ENCODE measurements at regions of chr6 and their contacts with region 1.

Region 1: GRCh38 chr6:130293800-130294199 is 71.0 kb upstream of the SAMD3 start:
- DNase-seq: peak; percentile 49
- ATAC-seq: peak; percentile 98
- H3K4me3 Mint-ChIP-seq: no peak overlapping the region
- H3K27ac Mint-ChIP-seq: 0 out of 2 replicates have a peak overlapping the region, but pooled peaks have one; percentile 20
- H3K4me1 Mint-ChIP-seq: no peaks in the 10 kb centered on the region
- H3K27me3 Mint-ChIP-seq: no peaks in the 10 kb centered on the region; the same call in 1 of the 2 replicates
- CTCF ChIP-seq: 0 out of 2 replicates have a peak, but pooled peaks have one; percentile 12

Region 2: GRCh38 chr6:130127195-130127594 is 166.6 kb before region 1 on chr6:
- CTCF ChIA-PET with region 1: no interaction called
- POLR2A ChIA-PET with region 1: interaction called, 10 read pairs
- DNase-seq: no peak
- ATAC-seq: no peak
- H3K4me3 Mint-ChIP-seq: no peak overlapping the region
- H3K27ac Mint-ChIP-seq: no peak overlapping the region
- H3K4me1 Mint-ChIP-seq: peaks cover 28% of the 10 kb centered on the region
- H3K27me3 Mint-ChIP-seq: no peaks in the 10 kb centered on the region
- CTCF ChIP-seq: no peak

Region 3: DNA sequence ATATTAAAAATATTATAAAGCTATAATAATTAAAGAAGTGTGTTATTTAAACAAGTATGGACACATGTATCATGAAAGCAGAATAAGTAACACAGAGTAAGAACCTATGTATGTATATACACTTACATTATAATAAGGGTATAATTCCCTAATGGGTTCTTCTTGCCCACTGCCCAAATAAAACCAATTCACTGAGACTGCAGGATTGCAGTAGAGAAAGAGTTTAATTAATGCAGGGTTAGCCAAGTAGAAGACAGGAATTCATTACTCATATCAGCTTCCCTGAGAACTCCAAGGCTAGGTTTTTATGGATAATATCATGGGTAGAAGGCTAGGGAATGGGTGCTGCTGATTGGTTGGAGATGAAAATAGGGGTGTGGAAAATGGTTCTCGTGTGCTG is 17.3 kb before region 1 on chr6:
- CTCF ChIA-PET with region 1: no interaction called
- POLR2A ChIA-PET with region 1: no interaction called
- DNase-seq: no peak
- ATAC-seq: no peak
- H3K4me3 Mint-ChIP-seq: no peak overlapping the region
- H3K27ac Mint-ChIP-seq: no peak overlapping the region
- H3K4me1 Mint-ChIP-seq: peaks cover 9% of the 10 kb centered on the region
- H3K27me3 Mint-ChIP-seq: no peaks in the 10 kb centered on the region
- CTCF ChIP-seq: no peak

Measured in WTC11 (cell line).